Panc1 (cell line): ENCODE measurements at regions of chr6 and their contacts with region 1.

Region 1: DNA sequence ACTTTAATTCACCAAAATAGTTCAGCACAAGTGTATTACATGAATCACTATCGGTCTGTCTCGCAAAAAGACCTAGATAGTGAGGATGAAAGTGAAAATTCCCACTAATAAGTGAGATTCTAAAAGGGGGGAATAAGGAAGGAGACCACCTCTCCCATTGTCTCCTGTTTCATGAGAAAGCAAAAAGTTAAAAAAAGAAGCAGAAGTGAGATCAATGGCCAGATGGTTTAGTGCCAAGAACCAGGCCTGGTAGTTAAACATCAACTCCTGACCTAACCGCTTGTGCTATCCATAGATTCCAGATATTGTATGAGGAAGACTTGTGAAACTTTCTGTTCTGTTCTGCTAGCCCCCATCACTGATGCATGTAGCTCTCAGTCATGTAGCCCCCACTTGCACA is 293.0 kb downstream of the RNGTT start:
- DNase-seq: no peak
- ATAC-seq: no peak
- H3K4me3 ChIP-seq: no peak overlapping the region
- H3K27ac ChIP-seq: no peak overlapping the region
- H3K4me1 ChIP-seq: no peaks in the 10 kb centered on the region
- H3K27me3 ChIP-seq: no peaks in the 10 kb centered on the region
- CTCF ChIP-seq: no peak

Region 2: DNA sequence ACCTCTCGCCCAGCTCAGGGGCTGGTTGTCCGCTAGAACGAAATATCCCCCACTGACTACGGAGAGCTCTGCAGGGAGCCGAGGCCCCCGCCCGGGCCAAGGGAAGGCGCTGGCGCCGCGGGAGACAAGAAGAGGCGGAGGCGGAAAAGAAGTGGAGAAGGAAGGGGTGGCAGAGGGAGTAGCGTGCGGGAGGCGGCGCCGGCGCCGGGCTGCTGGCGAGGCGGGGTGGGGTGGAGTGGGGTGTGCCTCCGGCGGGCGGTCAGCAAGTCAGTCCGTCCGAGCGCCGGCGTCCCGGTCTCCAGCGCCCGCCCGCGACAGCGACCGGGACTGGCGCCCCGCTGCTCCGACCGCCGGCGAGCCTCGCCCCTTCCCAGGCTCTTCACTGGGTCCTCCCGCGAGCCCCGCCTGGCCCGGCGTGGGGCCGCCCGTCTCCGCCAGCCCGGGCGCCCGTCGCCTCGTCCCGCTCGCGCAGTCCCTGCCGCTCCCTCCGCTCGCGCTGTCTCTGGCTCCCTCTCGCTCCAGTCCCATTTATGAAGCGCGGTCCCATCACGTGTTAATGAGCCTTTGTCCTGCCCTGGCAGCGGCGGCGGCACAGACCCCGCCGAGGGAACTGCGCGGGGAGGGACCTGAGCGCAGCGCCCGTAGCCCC is 504.4 kb before region 1 on chr6 and contains the start of gene CNR1:
- CTCF ChIA-PET with region 1: no interaction called
- POLR2A ChIA-PET with region 1: no interaction called
- in situ Hi-C with region 1: no loop called
- intact Hi-C with region 1: no loop called
- DNase-seq: no peak
- ATAC-seq: peak; percentile 89
- H3K4me3 ChIP-seq: peak within 1 kb of the TSS; percentile 34 to 55
- H3K27ac ChIP-seq: no peak within 1 kb of the TSS
- H3K4me1 ChIP-seq: no peaks in the 10 kb centered on the region
- H3K27me3 ChIP-seq: peaks cover 25% of the 10 kb centered on the region
- CTCF ChIP-seq: peak; percentile 21
- total RNA-seq, gene CNR1: 0.13 TPM

Region 3: GRCh38 chr6:88763160-88763559 is 92.8 kb after region 1 on chr6:
- CTCF ChIA-PET with region 1: no interaction called
- POLR2A ChIA-PET with region 1: interaction called, 10 read pairs
- in situ Hi-C with region 1: no loop called
- intact Hi-C with region 1: no loop called
- DNase-seq: no peak
- ATAC-seq: no peak; the same call in 1 of the 2 replicates
- H3K4me3 ChIP-seq: no peak overlapping the region
- H3K27ac ChIP-seq: no peak overlapping the region
- H3K4me1 ChIP-seq: no peaks in the 10 kb centered on the region
- H3K27me3 ChIP-seq: no peaks in the 10 kb centered on the region
- CTCF ChIP-seq: no peak